ENCODE measurements at regions of chr5 and their contacts with region 1.

Region 1: DNA sequence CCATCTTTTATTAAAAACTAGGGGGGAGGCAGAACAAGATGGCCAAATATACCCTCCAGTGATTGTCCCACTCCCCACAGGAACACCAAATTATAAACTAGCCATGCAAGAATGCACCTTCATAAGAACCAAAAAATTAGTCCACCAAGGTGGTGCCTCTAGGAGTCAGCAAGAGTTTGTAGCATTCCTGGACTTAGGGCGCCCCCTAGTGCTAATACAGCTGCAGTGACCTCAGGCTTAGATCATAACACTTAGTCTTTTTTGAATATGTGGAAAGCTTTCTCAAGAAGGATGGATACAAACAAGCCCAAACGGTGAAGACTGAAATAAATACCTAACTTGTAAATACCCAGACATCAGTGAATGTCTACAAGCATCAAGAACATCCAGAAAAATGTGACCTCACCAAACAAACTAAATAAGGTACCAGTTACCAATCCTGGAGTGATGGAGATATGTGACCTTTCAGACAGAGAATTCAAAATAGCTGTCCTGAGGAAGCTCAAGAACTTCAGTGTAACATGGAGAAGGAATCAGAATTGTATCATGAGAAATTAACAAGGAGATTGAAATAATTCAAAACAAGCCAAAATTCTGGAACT is 19.3 kb downstream of the PPIP5K2 start:
- DNase-seq: peak; percentile 74
- CTCF ChIP-seq: peak; percentile 89

Region 2: DNA sequence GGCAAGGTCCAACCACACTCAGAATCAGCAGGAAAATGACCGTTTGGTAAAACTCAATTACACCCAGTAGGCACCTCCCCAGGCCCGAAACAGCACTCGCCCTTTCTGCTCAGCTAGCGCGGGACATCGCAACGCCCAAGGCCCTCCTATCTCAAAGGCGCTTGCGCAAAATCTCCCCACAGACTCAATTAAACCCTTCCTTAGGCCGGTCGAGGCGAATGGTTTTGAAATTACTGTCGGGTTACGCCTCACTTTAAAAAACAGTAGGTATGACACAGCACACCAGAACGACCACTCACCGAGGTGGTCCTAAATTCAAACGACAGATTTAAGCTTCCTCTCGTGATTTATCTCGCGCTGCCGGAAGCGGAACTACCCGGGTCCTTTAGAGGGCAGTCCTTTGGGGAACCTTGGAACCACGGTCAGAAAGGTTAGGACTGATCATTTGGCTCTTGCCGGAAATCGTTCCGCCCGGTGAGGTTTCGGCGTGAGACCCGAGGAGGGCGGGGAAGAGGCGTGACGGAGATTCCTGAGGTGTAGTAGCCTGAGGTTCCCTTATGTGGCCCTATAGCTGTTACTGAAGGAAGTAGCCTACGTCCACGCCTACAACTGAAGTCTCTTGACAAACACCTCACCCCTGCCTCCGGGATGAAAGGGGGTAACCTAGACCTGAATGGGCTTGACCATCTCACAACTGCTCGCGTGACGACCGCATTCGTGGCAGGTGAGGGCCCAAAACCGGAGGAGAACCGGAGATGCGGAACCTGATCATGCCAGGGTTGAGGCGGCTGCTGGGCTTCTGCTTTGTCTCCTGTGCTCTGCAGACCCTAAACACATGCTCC is 19.4 kb before region 1 on chr5 and contains the starts of genes GIN1 and PPIP5K2:
- CTCF ChIA-PET with region 1: interaction called, 21 read pairs
- POLR2A ChIA-PET with region 1: no interaction called
- DNase-seq: peak; percentile 85
- CTCF ChIP-seq: no peak

Region 3: DNA sequence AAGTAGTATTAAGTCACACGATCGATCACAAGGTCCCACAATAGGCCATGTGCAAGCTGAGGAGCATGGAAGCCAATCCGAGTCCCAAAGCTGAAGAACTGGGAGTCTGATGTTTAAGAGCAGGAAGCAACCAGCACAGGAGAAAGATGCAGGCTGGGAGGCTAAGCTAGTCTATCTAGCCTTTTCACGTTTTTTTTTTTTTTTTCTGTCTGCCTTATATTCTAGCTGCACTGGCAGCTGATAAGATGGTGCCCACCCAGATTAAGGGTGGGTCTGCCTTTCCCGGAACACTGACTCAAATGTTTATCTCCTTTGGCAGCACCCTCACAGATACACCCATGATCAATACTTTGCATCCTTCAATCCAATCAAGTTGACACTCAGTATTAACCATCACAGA is 12.8 kb before region 1 on chr5:
- CTCF ChIA-PET with region 1: interaction called, 10 read pairs
- POLR2A ChIA-PET with region 1: no interaction called
- DNase-seq: no peak
- CTCF ChIP-seq: no peak

Region 4: GRCh38 chr5:103166706-103167105 is 27.3 kb after region 1 on chr5:
- CTCF ChIA-PET with region 1: interaction called, 11 read pairs
- POLR2A ChIA-PET with region 1: no interaction called
- DNase-seq: no peak
- CTCF ChIP-seq: no peak

Measured in GM10248 (cell line).